Activated CD8-positive, alpha-beta T cell treated with anti-CD3 and anti-CD28 coated beads, Interleukin-2, amount 10 ng/mL, durations not matched to agents 7 days and 5 days (primary cell): ENCODE measurements at regions of chr18 and their contacts with region 1.

Region 1: DNA sequence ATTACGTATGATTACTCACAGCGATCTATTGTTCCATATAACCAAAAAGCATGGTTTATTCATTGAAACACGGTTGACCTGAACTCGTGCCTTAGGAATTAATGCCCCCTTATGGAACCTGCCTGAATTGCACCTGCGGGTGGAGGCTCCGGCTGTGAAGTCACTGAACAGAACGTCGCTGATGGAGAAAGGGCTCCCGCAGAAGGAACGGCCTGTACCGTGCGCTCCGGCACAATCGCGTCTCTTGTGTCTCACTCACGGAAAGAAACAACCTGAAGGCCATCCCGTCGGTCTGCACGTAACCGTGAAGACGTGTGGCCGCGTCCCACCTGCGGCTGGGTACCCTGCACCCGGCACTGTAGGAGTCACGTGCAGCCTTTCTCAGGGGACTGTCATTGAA is 133.1 kb downstream of the NFATC1 start:
- DNase-seq: peak; percentile 79
- ATAC-seq: no peak
- H3K4me3 Mint-ChIP-seq: no peak overlapping the region
- H3K27ac Mint-ChIP-seq: no peak overlapping the region
- H3K4me1 Mint-ChIP-seq: peaks cover 17% of the 10 kb centered on the region
- H3K27me3 Mint-ChIP-seq: no peaks in the 10 kb centered on the region

Region 2: DNA sequence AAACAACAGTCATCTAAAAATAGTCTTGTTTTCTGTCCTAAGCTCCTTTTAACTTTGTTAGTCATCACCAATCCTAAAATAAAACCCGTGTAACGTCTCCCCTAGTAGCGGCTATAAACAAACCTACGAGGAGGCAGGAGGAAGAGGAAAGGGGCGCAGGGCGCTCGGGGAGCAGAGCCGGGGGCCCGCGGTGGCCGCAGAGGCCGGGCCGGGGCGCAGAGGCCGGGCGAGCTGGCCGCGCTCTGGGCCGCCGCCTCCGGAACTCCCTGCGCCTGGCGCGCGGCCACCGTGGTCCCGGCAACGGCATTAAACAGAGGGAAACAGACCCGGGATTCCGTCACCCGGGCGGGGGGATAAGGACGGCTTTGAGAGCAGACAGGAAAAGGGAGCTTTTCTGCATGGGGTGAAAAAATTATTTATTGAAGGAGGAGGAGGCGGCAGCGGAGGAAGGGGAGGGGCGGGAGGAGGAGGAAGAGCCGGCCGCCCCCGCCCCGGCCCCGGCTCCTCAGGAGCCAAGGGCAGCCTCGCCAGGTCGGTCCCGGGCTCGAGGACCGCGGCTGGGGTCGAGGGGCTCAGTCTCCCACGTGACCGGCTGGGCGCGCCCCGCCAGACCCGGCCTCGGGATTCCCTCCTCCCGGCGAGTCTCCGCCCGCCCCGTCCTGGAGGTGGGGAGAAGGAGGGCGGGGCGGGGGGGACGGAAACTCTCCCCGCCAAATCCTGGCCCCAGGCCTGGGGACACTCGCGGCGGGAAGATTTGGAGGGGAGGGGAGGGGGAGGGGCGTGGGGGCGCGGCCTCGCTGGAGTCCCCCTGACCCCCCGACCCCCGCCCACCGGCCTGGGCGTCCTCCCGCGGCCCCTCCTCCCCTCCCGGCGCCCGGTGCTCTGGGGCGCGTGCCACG is 135.0 kb before region 1 on chr18:
- CTCF ChIA-PET with region 1: interaction called, 19 read pairs
- POLR2A ChIA-PET with region 1: interaction called, 5 read pairs
- DNase-seq: peak; percentile 44
- ATAC-seq: peak; percentile 38
- H3K4me3 Mint-ChIP-seq: peak overlapping the region; percentile 74
- H3K27ac Mint-ChIP-seq: no peak overlapping the region
- H3K4me1 Mint-ChIP-seq: peaks cover 20% of the 10 kb centered on the region
- H3K27me3 Mint-ChIP-seq: peaks cover 33% of the 10 kb centered on the region

Region 3: GRCh38 chr18:79567481-79568147 is 38.8 kb after region 1 on chr18:
- CTCF ChIA-PET with region 1: no interaction called
- POLR2A ChIA-PET with region 1: no interaction called
- DNase-seq: no peak
- ATAC-seq: no peak
- H3K4me3 Mint-ChIP-seq: no peak overlapping the region
- H3K27ac Mint-ChIP-seq: no peak overlapping the region
- H3K4me1 Mint-ChIP-seq: no peaks in the 10 kb centered on the region
- H3K27me3 Mint-ChIP-seq: peaks cover 2% of the 10 kb centered on the region

Region 4: DNA sequence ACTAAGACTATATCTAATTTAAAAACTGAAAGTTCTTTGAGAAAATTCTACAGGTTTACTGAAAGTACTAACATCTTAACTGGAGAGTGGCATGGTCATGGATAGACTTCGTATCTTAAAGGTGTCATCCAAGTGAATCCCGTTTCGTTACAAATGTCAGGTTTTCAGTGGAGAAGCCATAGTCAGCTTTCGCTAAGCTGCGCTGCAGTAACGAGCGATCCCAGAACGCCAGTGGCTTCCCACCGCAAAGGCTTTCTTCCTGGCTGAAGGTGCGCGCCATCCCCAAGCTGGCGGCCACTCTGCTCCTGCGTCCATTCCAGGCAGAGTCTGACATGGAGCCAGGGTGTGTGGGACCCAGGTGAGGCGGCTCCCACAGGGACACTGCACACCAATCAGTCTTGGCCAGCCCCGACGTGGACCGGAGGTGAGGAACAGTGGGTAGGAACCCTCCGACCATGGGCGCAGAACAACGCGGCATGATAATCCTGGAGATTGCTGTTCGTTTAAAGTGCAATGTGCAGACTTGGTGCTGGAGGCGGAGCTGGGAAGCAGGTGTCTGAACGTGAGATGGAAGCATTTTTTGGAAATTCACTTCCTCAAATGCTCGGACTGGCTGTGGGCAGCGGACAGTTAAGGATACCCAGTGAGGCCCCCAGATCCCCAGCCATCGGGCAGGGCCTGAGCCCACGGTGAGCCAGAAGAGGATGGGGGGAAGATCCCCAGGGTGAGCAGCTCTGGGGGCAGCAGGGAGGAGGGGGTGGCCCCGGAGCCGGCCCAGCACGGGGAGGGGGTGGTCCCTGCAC is 241.1 kb after region 1 on chr18:
- CTCF ChIA-PET with region 1: no interaction called
- POLR2A ChIA-PET with region 1: no interaction called
- DNase-seq: no peak
- ATAC-seq: no peak
- H3K4me3 Mint-ChIP-seq: no peak overlapping the region
- H3K27ac Mint-ChIP-seq: no peak overlapping the region
- H3K4me1 Mint-ChIP-seq: no peaks in the 10 kb centered on the region
- H3K27me3 Mint-ChIP-seq: peaks cover 7% of the 10 kb centered on the region